Activated naive CD4-positive, alpha-beta T cell treated with anti-CD3 and anti-CD28 coated beads for 36 hours (primary cell): ENCODE measurements at regions of chrX and their contacts with region 1.

Region 1: DNA sequence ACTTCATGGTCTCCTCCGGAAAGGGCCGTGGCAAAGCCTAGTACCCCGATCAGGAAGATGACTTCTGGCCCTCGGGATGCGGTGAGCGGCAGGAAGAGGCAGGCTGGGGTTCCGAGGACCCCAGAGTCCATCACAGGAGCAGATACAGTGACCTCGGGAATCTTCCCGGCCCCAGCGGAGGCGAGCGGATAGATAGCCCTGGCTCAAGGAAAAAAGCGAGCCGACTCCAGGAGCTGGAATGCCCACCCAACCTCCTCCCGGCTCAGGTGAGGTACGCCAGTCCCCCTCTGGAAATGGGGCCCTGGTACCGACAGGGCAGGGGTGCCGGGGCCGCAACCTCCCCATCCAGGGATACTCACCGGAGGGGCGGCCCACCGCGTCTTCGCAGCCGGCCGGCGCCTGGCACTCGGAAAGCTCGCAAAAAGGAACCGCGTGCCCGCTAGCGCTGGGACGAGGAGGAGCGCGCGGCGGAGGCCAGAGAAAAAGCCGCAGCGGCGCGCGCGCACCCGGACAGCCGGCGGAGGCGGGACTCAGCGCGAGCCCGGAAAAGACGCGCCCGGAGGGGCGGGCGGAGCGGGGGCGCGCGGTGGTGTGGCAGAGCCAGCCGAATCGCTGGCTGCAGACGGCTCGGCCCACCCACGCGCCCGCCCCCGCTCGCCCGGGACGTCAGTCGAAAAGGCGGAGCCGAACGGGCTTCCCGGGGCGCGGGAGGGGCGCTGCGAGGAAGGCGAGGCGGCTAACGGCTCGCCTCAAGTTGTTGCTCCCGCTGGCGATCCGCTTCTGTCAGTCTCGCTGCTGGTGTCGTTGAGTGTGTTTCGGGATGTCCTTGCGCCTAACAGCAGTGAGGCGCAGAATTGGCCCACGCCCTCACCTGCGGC is at the start of gene ACSL4:
- DNase-seq: peak; percentile 86
- H3K4me3 Mint-ChIP-seq: peak within 1 kb of the TSS; percentile 93
- H3K27ac Mint-ChIP-seq: peak within 1 kb of the TSS; percentile 96
- H3K4me1 Mint-ChIP-seq: peaks cover 29% of the 10 kb centered on the region
- H3K27me3 Mint-ChIP-seq: no peaks in the 10 kb centered on the region
- total RNA-seq, gene ACSL4: 58.5 to 58.8 TPM

Region 2: GRCh38 chrX:109270580-109271484 is 462.2 kb before region 1 on chrX:
- CTCF ChIA-PET with region 1: no interaction called
- intact Hi-C with region 1: loop called (anchors 5 kb)
- DNase-seq: peak; percentile 60
- H3K4me3 Mint-ChIP-seq: no peak overlapping the region
- H3K27ac Mint-ChIP-seq: peak overlapping the region; percentile 61
- H3K4me1 Mint-ChIP-seq: peaks cover 6% of the 10 kb centered on the region
- H3K27me3 Mint-ChIP-seq: no peaks in the 10 kb centered on the region

Region 3: GRCh38 chrX:109685656-109686078 is 47.4 kb before region 1 on chrX:
- CTCF ChIA-PET with region 1: no interaction called
- intact Hi-C with region 1: loop called (anchors 1 kb)
- DNase-seq: peak; percentile 55
- H3K4me3 Mint-ChIP-seq: no peak overlapping the region
- H3K27ac Mint-ChIP-seq: peak overlapping the region; percentile 89
- H3K4me1 Mint-ChIP-seq: peaks cover 33% of the 10 kb centered on the region
- H3K27me3 Mint-ChIP-seq: no peaks in the 10 kb centered on the region

Region 4: GRCh38 chrX:109840585-109840984 is 107.6 kb after region 1 on chrX:
- CTCF ChIA-PET with region 1: no interaction called
- intact Hi-C with region 1: loop called (anchors 1 kb)
- DNase-seq: peak; percentile 47
- H3K4me3 Mint-ChIP-seq: no peak overlapping the region
- H3K27ac Mint-ChIP-seq: no peak overlapping the region
- H3K4me1 Mint-ChIP-seq: peaks cover 17% of the 10 kb centered on the region
- H3K27me3 Mint-ChIP-seq: no peaks in the 10 kb centered on the region

Region 5: DNA sequence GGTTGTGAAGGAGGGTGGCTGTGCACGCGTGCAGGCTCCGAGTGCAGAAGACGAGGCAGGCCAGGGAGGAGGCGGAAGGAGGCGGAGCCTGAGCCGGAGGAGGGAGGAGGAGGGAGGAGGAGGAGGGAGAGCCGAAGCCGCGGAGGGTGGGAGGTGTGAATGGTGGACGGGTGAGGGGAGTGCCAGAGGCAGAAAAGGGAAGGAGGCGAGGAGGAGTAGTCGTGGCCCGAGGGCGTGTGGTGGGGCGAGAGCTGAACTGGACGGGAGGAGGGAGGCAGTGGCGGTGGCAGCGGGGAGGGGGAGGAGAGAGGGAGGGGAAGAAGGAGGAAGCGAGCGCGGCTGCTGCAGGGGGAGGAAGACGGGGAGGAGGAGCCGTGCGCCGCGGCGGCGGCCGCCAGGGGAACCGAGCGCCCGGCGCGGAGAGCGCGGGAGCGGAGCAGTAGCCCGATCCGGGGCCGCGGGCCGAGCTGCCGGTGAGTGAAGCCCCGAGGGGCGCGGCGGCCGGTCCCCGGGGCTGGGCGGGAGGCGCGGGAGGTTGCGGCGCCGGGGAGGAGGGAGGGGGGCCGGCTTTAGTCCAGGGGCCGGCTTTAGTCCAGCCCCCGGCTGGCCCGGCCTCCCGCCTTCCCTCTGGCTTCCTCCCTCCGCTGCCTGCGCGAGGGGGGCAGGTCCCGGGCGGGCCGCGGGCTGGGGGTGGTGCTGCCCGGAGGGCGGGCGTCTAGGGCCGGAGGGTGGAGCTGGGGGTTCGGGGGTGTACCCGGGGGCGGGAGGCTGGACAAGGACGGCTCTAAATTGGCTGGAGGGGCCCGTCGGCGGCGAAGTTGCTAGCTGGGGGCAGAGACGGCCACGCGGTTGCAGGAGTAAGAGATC is 269.5 kb after region 1 on chrX and contains the start of gene TMEM164:
- CTCF ChIA-PET with region 1: no interaction called
- intact Hi-C with region 1: loop called (anchors 5 kb)
- DNase-seq: peak; percentile 83
- H3K4me3 Mint-ChIP-seq: peak within 1 kb of the TSS; percentile 83
- H3K27ac Mint-ChIP-seq: peak within 1 kb of the TSS; percentile 81
- H3K4me1 Mint-ChIP-seq: peaks cover 31% of the 10 kb centered on the region
- H3K27me3 Mint-ChIP-seq: no peaks in the 10 kb centered on the region
- total RNA-seq, gene TMEM164: 11.9 to 12.0 TPM

Region 6: DNA sequence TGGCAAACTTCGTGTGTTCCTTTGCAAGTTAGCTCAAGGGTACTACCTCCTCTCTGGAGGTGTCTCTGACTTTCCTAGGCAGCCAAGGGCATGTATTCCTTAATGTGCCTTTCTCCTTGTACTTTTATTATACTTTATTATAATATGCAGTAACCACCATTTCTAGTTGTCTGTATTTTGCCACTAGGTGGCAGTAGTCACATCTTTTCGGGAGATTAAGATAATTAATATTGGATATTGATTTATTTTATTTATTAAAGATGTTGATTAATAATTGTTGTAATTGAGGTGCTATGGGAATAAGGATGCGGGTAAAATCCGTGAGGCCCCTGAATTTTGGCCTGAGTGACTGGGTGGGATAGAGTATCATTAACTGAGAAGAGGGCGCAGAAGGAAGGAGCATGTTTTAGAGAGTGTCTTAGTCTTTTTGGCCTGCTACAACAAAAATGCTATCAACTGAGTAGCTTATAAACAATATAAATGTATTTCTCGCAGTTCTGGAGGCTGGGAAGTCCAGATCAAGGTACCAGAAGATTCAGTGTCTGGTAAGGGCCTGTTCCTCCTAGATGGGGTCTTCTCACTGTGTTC is 423.2 kb after region 1 on chrX:
- CTCF ChIA-PET with region 1: no interaction called
- intact Hi-C with region 1: no loop called
- DNase-seq: no peak
- H3K4me3 Mint-ChIP-seq: no peak overlapping the region
- H3K27ac Mint-ChIP-seq: no peak overlapping the region
- H3K4me1 Mint-ChIP-seq: peaks cover 10% of the 10 kb centered on the region
- H3K27me3 Mint-ChIP-seq: no peaks in the 10 kb centered on the region